ENCODE measurements at regions of chr12 and their contacts with region 1.

Region 1: DNA sequence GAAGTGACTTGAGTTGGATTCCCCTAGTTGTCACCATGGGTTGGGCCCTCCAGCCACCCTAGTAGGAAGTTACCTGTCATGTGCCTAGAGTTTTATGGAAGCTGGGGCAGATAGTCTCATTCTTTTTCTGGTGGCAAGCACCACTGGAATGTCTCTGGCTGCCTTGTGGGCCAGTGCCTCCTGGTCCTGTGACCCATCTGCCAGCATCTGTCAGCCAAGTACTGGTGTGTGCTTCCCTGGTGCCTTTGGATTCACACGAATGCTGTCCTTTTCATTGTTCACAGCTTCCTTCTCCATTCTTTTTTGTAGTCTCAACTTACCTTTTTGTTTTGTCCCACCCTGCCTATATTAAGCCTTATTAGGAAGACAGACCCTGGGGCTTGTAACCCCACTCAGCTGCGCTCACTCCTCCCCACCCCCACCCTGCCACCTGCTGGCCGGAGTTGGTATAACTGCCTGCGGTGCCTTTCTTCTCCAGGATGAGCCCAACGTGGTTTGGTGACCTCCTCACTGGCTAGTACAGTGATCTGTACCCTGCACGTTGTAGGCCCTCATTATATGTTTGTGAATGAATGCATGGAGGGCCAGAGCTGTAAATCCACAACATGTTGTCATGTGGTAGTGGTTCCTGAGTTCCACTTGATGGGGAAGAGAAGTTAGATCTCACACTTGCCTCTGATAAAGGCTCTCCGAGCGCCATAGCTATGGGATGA is 125.7 kb downstream of the TSPAN9 start:
- DNase-seq: peak in 1 of 2 experiments; percentile 93
- H3K4me3 ChIP-seq: no peak overlapping the region
- H3K27ac ChIP-seq: no peak overlapping the region
- H3K4me1 ChIP-seq: peaks cover 3 to 16% (median 10%) of the 10 kb centered on the region in 4 experiments
- H3K27me3 ChIP-seq: peaks cover 10 to 43% (median 32%) of the 10 kb centered on the region in 4 experiments
- CTCF ChIP-seq: peak; percentile 92 to 94 (median 93)
- EP300 ChIP-seq: no peak
- POLR2A ChIP-seq: no peak
- RAD21 ChIP-seq: peak; percentile 65 to 77

Region 2: DNA sequence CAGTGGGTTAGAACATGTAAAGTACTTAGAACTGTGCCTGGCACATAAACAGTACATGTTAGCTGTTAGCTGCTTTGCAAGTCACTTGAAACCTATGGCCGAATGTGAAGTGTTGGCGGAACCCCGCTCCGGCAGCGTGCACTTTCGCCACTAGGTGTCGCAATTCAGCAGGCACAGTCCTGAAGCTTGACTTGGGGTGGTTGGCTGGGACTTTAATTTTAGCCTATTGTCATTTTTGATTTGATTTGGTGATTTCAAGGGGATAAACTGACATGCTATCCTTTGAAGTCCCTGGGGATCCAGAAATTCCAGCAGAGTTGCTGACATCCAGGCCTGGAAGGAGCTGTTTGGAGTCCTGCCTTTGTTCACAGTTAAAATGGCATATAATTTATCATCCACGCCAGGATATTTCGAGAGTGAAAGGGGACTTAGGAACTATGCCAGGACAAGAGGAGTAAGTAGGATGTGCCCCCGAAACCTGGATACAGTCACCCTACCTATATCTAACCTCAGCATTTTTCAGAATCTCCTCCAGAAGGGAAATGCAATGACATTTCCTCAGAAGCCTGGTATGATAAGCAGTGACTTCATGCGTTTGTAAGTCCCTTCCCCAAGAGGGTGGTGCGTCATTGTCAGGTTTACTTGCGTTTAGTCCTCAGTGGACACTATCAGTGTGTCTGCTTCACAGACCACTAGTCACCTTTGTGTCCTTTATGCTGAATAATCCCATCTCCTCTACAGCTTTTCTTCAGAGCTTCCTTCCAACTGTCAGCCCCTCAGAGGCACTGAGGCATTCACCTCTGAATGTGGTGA is 129.2 kb before region 1 on chr12:
- CTCF ChIA-PET with region 1: interaction called, 12 read pairs
- POLR2A ChIA-PET with region 1: interaction called, 3 read pairs
- DNase-seq: peak; percentile 79 to 96
- H3K4me3 ChIP-seq: no peak overlapping the region
- H3K27ac ChIP-seq: no peak overlapping the region
- H3K4me1 ChIP-seq: peaks cover 0 to 12% (median 3%) of the 10 kb centered on the region in 4 experiments; a peak in 3 of 7 replicates
- H3K27me3 ChIP-seq: peaks cover 0 to 18% (median 8%) of the 10 kb centered on the region in 4 experiments; a peak in 3 of 7 replicates
- CTCF ChIP-seq: peak; percentile 95 to 99 (median 99)
- EP300 ChIP-seq: no peak
- POLR2A ChIP-seq: no peak
- RAD21 ChIP-seq: peak; percentile 90 to 95

Region 3: DNA sequence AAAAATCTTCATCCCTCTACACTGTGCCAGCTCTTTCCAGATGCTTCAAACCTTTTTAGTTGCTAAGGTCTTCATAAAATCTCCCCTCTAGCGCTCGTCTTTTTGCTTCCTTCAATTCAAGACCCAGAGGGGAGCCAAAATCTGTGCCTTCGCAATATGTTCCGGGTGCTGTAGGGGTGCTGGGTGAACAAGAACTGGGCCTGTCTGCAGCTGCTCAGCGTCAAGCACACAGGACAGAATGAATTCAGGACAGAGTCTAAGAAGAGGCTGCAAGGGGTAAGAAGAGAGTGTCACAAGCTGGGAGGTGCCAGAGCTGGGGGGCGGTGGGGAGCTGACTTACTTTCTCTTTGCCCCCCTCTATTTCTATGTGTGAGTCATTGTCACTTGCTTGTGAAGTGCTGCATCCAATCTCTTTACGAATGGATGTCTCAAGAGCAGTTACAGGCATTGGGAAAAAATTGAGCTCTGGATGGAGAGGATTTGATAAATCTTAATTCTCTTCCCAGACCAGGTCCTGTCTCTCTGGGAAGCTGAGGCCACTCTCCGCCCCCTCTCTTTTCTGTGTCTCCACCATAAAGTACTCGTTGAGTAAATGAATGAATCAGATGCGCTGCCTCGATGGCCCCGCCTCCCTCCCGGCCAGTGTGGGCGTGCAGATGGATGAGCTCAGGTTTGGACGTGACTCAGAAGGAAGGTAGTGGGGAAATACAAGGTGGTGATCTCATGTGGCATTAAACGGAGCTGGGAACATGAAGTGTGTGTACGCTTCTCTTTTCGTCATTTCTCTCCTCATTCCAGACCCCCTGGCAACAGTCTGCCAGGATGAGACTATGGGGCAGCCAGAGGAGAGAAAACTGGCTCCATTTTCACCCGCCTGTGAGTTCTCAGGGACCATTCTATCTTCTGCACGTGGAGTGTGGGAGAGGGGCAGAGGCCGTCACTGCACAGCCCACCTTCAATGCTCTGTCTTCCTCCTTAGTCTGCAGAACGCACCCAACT is 34.4 kb before region 1 on chr12:
- CTCF ChIA-PET with region 1: interaction called, 41 read pairs
- POLR2A ChIA-PET with region 1: interaction called, 4 read pairs
- DNase-seq: peak in 1 of 2 experiments; percentile 33
- H3K4me3 ChIP-seq: no peak overlapping the region
- H3K27ac ChIP-seq: no peak overlapping the region
- H3K4me1 ChIP-seq: peaks cover 8 to 23% (median 19%) of the 10 kb centered on the region in 4 experiments
- H3K27me3 ChIP-seq: no peaks in the 10 kb centered on the region
- CTCF ChIP-seq: no peak
- EP300 ChIP-seq: no peak
- POLR2A ChIP-seq: no peak
- RAD21 ChIP-seq: no peak

Region 4: GRCh38 chr12:3218228-3219171 is 15.6 kb after region 1 on chr12:
- CTCF ChIA-PET with region 1: interaction called, 110 read pairs
- POLR2A ChIA-PET with region 1: no interaction called
- DNase-seq: no peak
- H3K4me3 ChIP-seq: no peak overlapping the region
- H3K27ac ChIP-seq: no peak overlapping the region
- H3K4me1 ChIP-seq: peaks cover 3 to 14% (median 10%) of the 10 kb centered on the region in 4 experiments
- H3K27me3 ChIP-seq: no peaks in the 10 kb centered on the region
- CTCF ChIP-seq: no peak
- EP300 ChIP-seq: no peak
- POLR2A ChIP-seq: no peak
- RAD21 ChIP-seq: no peak

Region 5: DNA sequence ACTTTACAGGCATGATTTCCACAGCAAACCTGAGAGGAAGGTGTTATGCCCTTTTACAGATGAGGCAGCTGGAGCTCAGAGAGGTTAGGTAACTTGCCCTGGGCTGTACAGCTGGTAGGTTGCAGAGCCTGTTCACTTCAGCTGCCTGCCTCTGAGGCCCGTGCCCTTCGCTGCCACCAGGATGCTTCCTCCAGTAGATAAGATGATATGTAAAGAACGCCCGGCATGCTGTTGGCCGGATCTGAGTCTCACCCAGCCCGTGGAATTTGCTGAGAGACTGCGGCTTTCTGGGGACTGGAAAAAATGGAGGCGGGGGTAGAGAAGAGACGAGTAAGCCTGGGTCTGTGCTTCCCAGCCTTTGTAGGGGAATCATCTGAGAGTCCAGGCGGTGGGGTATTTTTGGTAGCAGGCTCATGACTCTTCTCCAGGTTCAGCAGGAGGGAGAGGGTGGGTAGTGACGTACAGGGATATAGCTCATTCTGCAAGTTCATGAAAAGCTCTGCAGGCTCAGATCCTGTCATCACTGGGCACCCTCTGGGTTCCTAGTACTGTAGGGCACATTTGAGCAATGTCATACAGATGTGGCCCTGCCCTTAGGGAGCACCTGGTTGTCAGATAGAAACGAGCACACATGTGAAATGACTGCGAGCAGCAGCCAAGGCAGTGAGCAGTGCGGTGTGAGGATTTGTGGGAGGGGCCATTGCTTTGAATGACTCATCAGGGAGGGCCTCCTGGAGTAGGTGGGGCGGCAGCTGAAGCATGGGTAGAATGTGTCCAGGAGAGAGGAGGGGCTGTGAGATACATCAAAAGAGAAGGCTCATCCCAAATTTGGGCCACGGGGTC is 33.7 kb after region 1 on chr12:
- CTCF ChIA-PET with region 1: interaction called, 54 read pairs
- POLR2A ChIA-PET with region 1: interaction called, 4 read pairs
- DNase-seq: no peak
- H3K4me3 ChIP-seq: no peak overlapping the region
- H3K27ac ChIP-seq: no peak overlapping the region
- H3K4me1 ChIP-seq: peaks cover 3 to 12% (median 9%) of the 10 kb centered on the region in 4 experiments
- H3K27me3 ChIP-seq: no peaks in the 10 kb centered on the region
- CTCF ChIP-seq: no peak
- EP300 ChIP-seq: no peak
- POLR2A ChIP-seq: no peak
- RAD21 ChIP-seq: no peak

Region 6: GRCh38 chr12:3275171-3276041 is 72.5 kb after region 1 on chr12:
- CTCF ChIA-PET with region 1: interaction called, 361 read pairs
- POLR2A ChIA-PET with region 1: interaction called, 5 read pairs
- DNase-seq: peak; percentile 23 to 97
- H3K4me3 ChIP-seq: 0 out of 8 replicates have a peak overlapping the region, but pooled peaks of 1 of the 4 experiments have one; percentile 20
- H3K27ac ChIP-seq: no peak overlapping the region
- H3K4me1 ChIP-seq: peaks cover 0 to 15% (median 7%) of the 10 kb centered on the region in 4 experiments
- H3K27me3 ChIP-seq: no peaks in the 10 kb centered on the region
- CTCF ChIP-seq: peak in 2 of 3 experiments; percentile 95 to 96; a peak in 3 of 4 replicates
- EP300 ChIP-seq: no peak
- POLR2A ChIP-seq: no peak
- RAD21 ChIP-seq: peak; percentile 92 to 96

Region 7: DNA sequence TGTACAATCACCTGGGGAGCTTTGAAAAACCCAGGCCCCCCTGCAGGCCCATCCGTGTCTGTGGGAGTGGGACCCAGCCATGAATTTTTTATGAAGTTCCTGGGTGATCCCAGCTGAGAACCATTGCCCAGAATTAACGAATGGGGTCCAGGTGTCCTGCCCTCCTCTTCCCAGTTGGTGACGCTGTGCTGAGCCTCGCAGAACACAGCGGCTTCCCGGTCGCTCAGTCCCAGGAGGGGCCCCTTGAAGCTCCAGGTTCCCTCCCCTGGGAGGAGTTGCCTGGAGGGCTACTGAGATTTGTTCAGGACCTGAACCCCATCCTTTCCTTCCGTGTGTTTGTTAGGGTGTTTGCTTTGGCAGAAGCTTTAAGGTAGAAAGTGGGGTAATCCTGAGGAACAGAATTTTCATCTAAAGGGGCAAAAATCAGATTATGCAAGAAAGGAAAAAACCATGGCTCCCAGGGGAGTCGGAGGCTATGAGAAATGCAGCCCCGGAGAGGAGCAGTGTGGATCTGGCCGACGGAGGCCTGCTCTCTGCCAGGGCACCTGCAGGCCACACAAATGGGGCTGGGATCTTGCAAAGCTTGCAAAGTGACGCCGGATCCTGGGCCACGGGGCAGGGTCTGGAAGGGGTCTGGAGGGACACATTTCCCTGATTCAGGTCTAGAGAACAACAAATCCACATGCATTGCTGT is 123.4 kb after region 1 on chr12:
- CTCF ChIA-PET with region 1: no interaction called
- POLR2A ChIA-PET with region 1: no interaction called
- DNase-seq: no peak
- H3K4me3 ChIP-seq: no peak overlapping the region
- H3K27ac ChIP-seq: no peak overlapping the region
- H3K4me1 ChIP-seq: no peaks in the 10 kb centered on the region; a peak in 1 of 7 replicates
- H3K27me3 ChIP-seq: no peaks in the 10 kb centered on the region
- CTCF ChIP-seq: peak; percentile 69 to 82 (median 70)
- EP300 ChIP-seq: no peak
- POLR2A ChIP-seq: no peak
- RAD21 ChIP-seq: peak; percentile 57 to 68

Region 8: GRCh38 chr12:3571724-3572123 is 368.8 kb after region 1 on chr12:
- CTCF ChIA-PET with region 1: no interaction called
- POLR2A ChIA-PET with region 1: no interaction called
- DNase-seq: no peak
- H3K4me3 ChIP-seq: no peak overlapping the region
- H3K27ac ChIP-seq: no peak overlapping the region
- H3K4me1 ChIP-seq: no peaks in the 10 kb centered on the region
- H3K27me3 ChIP-seq: no peaks in the 10 kb centered on the region; a peak in 1 of 7 replicates
- CTCF ChIP-seq: no peak
- EP300 ChIP-seq: no peak
- POLR2A ChIP-seq: no peak
- RAD21 ChIP-seq: no peak

Measured in H1 (cell line).